ENCODE measurements at regions of chr4 and their contacts with region 1.

Region 1: DNA sequence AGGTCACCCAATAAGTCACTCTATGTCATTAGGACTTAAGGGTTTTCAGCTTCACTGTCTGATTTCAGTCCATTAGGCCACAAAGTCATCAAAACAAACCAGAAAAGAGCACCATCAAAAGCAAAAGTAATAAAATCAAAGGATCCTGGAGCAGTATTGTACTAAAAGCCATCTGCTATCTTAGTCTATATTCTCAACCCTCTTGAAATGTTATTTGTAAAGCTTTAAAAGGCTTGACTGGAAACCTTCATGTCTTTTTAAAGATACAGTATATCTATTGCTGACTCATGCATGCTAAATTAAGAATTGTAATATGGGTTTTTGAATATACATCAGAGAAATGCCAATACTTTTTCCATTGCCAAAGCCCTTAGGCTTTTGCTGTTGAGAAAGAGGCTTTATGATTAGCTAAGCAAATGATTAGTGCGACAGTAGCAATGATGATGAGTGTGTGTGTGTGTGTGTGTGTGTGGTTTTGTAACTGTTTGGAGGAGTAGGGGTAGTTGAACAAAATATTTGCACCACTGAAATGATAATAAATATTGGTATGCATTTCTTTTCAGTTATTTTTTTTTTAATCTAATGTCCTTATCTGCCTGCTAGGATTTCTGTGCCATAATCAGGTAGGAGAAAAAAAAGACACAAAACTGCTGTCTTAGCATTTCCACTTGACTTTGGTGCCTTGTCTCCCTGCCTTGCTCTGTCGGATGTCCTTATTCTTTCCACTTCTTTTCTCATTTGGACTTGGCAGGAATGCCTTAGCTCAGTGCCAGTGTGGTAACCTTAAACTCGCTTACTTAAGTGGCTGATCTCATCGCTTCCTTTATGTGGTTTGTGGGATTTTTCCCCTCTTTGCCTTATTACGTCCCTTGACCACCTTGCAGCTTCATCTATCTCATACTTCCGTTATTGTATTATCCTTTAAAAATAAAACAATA is 119.7 kb downstream of the PCDH7 start:
- DNase-seq: peak in 1 of 2 experiments; percentile 59
- H3K4me3 ChIP-seq: no peak overlapping the region
- H3K27ac ChIP-seq: no peak overlapping the region
- H3K4me1 ChIP-seq: peaks cover 27% of the 10 kb centered on the region
- H3K27me3 ChIP-seq: no peaks in the 10 kb centered on the region
- CTCF ChIP-seq: no peak

Region 2: GRCh38 chr4:30757357-30757756 is 82.5 kb before region 1 on chr4:
- CTCF ChIA-PET with region 1: no interaction called
- POLR2A ChIA-PET with region 1: no interaction called
- intact Hi-C with region 1: loop called (anchors 1 kb)
- DNase-seq: peak; percentile 52 to 89
- H3K4me3 ChIP-seq: peak overlapping the region; percentile 4; the same call in 1 of the 2 replicates
- H3K27ac ChIP-seq: peak overlapping the region; percentile 83
- H3K4me1 ChIP-seq: peaks cover 44% of the 10 kb centered on the region
- H3K27me3 ChIP-seq: no peaks in the 10 kb centered on the region
- CTCF ChIP-seq: no peak

Region 3: GRCh38 chr4:30770049-30770549 is 69.8 kb before region 1 on chr4:
- CTCF ChIA-PET with region 1: no interaction called
- POLR2A ChIA-PET with region 1: no interaction called
- intact Hi-C with region 1: loop called (anchors 5 kb)
- DNase-seq: peak; percentile 30 to 95
- H3K4me3 ChIP-seq: peak overlapping the region; percentile 34; the same call in 1 of the 2 replicates
- H3K27ac ChIP-seq: peak overlapping the region; percentile 86
- H3K4me1 ChIP-seq: peaks cover 36% of the 10 kb centered on the region
- H3K27me3 ChIP-seq: no peaks in the 10 kb centered on the region
- CTCF ChIP-seq: no peak

Region 4: GRCh38 chr4:30821859-30822612 is 17.8 kb before region 1 on chr4:
- CTCF ChIA-PET with region 1: no interaction called
- POLR2A ChIA-PET with region 1: no interaction called
- intact Hi-C with region 1: loop called (anchors 1 kb)
- DNase-seq: peak; percentile 36 to 81
- H3K4me3 ChIP-seq: no peak overlapping the region
- H3K27ac ChIP-seq: no peak overlapping the region
- H3K4me1 ChIP-seq: peaks cover 10% of the 10 kb centered on the region
- H3K27me3 ChIP-seq: no peaks in the 10 kb centered on the region
- CTCF ChIP-seq: no peak

Region 5: GRCh38 chr4:30863021-30863420 is 23.2 kb after region 1 on chr4:
- CTCF ChIA-PET with region 1: no interaction called
- POLR2A ChIA-PET with region 1: no interaction called
- intact Hi-C with region 1: loop called (anchors 1 kb)
- DNase-seq: no peak
- H3K4me3 ChIP-seq: no peak overlapping the region
- H3K27ac ChIP-seq: no peak overlapping the region
- H3K4me1 ChIP-seq: peaks cover 25% of the 10 kb centered on the region
- H3K27me3 ChIP-seq: no peaks in the 10 kb centered on the region
- CTCF ChIP-seq: no peak

Region 6: GRCh38 chr4:31089815-31090214 is 250.0 kb after region 1 on chr4:
- CTCF ChIA-PET with region 1: no interaction called
- POLR2A ChIA-PET with region 1: no interaction called
- intact Hi-C with region 1: loop called (anchors 2 kb)
- DNase-seq: peak; percentile 77 to 97
- H3K4me3 ChIP-seq: peak overlapping the region; percentile 13; the same call in 1 of the 2 replicates
- H3K27ac ChIP-seq: peak overlapping the region; percentile 98
- H3K4me1 ChIP-seq: peaks cover 29% of the 10 kb centered on the region
- H3K27me3 ChIP-seq: no peaks in the 10 kb centered on the region
- CTCF ChIP-seq: no peak